AG04449 (cell line): ENCODE measurements at regions of chr2 and their contacts with region 1.

Region 1: DNA sequence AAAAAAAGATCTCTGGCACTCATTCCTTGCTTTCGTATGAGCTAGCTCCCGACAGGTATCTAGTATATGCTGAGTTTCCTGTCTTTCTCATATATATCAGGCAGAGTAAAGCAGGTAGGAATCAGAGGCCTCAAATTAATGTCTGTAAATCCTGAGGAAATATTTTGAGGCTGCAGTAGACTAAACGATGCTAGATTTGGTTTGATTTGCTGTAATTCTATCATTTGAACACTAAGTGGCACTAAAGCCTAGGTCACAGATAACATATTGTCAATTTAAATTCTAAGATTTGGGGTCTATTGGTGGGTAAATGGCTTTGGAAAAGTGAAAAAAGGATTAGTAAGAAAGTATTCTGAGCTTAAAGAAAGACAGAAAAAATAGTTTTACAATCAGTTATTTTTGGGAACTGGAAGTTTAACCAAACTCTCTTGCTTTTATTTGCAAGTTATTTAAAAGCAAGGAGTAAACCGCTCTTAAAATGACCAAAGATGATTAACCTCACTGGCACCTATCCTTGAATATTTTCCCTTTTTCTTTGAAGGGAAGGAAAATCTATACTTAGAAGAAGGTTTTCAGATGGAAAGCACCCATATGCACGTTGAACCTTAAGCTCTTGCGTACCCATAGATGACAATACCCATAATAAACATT is 37.6 kb upstream of the SLC4A10 start:
- DNase-seq: no peak
- H3K4me3 ChIP-seq: no peak overlapping the region
- CTCF ChIP-seq: peak; percentile 41

Region 2: DNA sequence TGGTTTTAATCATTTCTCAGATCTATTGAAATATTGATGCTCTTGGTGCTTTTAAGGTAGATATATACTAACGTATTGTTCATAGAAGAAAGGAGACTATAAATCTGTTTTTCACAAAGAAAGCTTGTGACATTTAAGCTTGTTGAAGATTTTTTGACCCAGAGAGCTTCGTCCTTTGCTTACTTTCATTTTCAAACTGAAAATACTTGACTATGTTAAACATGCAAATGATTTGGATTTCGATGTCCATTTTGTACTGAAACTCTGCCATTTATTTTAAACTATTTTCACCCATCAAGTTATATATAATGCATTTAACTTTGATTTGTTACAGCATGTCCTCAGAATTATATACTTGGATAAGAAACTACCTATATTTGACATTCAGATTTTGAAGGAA is 122.8 kb after region 1 on chr2:
- CTCF ChIA-PET with region 1: no interaction called
- POLR2A ChIA-PET with region 1: no interaction called
- DNase-seq: no peak
- H3K4me3 ChIP-seq: no peak overlapping the region
- CTCF ChIP-seq: no peak

Region 3: GRCh38 chr2:161946489-161947107 is 360.0 kb after region 1 on chr2:
- CTCF ChIA-PET with region 1: interaction called, 39 read pairs
- POLR2A ChIA-PET with region 1: no interaction called
- DNase-seq: no peak
- H3K4me3 ChIP-seq: no peak overlapping the region
- CTCF ChIP-seq: peak; percentile 24